Colonic mucosa (tissue), 4 donors: ENCODE measurements at regions of chr17 and their contacts with region 1.

Region 1: DNA sequence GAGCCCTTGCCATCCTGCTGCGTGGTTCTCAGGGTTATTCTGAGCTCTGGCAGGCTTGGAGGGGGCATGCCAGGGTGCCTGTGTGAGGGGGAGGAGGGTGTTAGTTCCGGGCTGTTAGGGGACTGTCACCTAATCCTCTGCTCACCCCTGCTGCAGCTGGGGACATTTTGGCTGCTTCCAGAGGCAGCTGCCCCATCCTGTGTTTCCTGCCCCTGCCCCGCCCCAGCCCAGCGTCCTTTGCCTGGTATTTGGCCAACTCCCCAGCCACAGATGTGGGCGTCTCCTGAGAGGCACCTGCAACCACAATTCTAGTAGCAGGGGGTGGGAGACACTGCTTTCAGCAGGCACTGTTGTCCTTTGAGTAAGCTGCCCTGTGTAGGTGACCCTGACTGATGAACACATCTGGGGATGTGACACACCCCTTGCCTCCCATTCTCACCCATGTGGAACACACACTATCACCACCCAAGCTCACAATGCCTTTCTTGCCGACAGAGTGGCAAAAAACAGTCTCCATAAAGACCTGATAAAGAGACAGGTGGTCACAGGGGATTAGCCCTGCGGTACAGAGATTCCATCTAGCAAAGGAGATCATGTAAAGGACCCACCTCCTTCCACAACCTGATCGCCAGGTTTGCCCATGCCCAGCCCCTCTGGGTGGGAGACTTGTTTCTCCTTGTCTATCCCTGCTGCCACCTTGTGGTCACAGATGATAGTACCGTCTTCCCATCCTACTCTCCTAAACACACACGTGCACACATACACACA is at the start of gene CHRNE:
- DNase-seq: peak; percentile 92
- H3K4me3 ChIP-seq: no peak within 1 kb of the TSS
- H3K27ac ChIP-seq: no peak within 1 kb of the TSS
- H3K4me1 ChIP-seq: peaks cover 14% of the 10 kb centered on the region
- H3K27me3 ChIP-seq: peaks cover 3% of the 10 kb centered on the region
- CTCF ChIP-seq: peak; percentile 67
- total RNA-seq, gene CHRNE: 1.1 TPM in 1 of 2 donors, not detected in the other

Region 2: DNA sequence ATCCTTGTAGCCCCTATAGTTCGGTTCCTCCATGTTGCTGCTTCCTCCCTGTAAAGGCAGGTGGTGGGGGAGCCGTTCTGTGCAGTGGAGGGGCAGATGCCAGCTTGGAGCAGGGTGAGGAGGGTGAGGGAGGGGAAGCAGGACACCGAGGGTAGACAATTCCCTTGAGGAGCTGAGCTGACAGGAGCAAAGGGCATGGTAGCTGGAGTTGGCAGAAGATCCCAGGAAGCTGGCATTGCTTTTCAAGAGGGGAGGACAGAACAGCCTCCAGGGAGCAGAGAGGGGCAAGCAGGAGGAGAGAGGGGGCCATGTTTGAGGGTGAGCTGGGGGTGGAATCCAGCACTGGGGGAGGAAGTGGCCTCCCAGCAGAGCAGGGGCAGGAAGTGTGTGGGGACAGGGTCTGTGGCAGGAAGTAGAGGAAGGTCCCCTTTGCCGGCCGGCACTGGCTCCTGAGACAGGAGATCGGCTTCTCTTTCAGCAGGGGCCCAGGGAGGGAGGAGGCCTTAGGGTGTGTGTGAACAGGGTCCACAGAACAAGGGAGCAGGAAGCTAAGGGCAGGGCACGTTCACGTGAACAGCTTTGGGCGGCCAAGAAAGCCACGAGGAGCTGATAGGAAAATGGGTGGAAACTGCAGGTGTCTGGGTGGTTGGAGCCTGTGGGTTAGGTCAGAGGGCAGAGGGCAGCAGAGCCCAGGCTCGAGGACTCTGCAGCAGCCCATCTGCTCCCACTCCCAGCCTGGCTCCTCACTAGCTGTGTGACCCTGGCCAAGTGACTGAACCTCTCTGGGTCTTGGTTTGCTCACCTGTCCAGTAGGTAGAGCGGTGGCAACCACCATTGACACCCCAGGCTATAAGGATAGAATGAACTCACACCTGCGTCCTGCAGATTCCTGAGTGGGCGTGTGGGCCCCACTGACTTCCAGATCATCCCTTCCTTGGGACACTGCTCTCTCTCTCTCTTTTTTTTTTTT is 422.0 kb before region 1 on chr17:
- intact Hi-C with region 1: no loop called
- DNase-seq: peak; percentile 90
- H3K4me3 ChIP-seq: no peak overlapping the region
- H3K27ac ChIP-seq: peak overlapping the region; percentile 93
- H3K4me1 ChIP-seq: peaks cover 33% of the 10 kb centered on the region
- H3K27me3 ChIP-seq: no peaks in the 10 kb centered on the region
- CTCF ChIP-seq: no peak

Region 3: GRCh38 chr17:4969551-4970173 is 66.4 kb after region 1 on chr17:
- intact Hi-C with region 1: loop called (anchors 5 kb)
- DNase-seq: no peak
- H3K4me3 ChIP-seq: no peak overlapping the region
- H3K27ac ChIP-seq: peak overlapping the region; percentile 95
- H3K4me1 ChIP-seq: no peaks in the 10 kb centered on the region
- H3K27me3 ChIP-seq: no peaks in the 10 kb centered on the region
- CTCF ChIP-seq: no peak